CD4-positive, alpha-beta memory T cell (primary cell): ENCODE measurements at regions of chr2 and their contacts with region 1.

Region 1: GRCh38 chr2:98518090-98518489 is 73.4 kb downstream of the INPP4A start:
- DNase-seq: peak; percentile 55 to 65 (median 61)
- H3K4me3 ChIP-seq: no peak overlapping the region
- H3K4me3 Mint-ChIP-seq: no peak overlapping the region
- H3K27ac ChIP-seq: no peak overlapping the region
- H3K27ac Mint-ChIP-seq: peak overlapping the region in 5 of 7 donors; percentile 19 to 70 (median 45)
- H3K4me1 ChIP-seq: peaks cover 54% of the 10 kb centered on the region
- H3K4me1 Mint-ChIP-seq: peaks cover 38 to 58% (median 50%) of the 10 kb centered on the region in 4 donors
- H3K27me3 ChIP-seq: no peaks in the 10 kb centered on the region
- H3K27me3 Mint-ChIP-seq: no peaks in the 10 kb centered on the region

Region 2: GRCh38 chr2:98479959-98480524 is 38.0 kb before region 1 on chr2:
- CTCF ChIA-PET with region 1: interaction called, 5 read pairs
- POLR2A ChIA-PET with region 1: no interaction called
- intact Hi-C with region 1: loop called (anchors 5 kb)
- DNase-seq: peak in 3 of 5 donors; percentile 33 to 89 (median 42)
- H3K4me3 ChIP-seq: no peak overlapping the region
- H3K4me3 Mint-ChIP-seq: peak overlapping the region; percentile 41 to 75 (median 72)
- H3K27ac ChIP-seq: peak overlapping the region; percentile 61
- H3K27ac Mint-ChIP-seq: peak overlapping the region; percentile 91 to 95 (median 93)
- H3K4me1 ChIP-seq: peaks cover 100% of the 10 kb centered on the region
- H3K4me1 Mint-ChIP-seq: peaks cover 84 to 100% (median 93%) of the 10 kb centered on the region in 4 donors
- H3K27me3 ChIP-seq: no peaks in the 10 kb centered on the region
- H3K27me3 Mint-ChIP-seq: no peaks in the 10 kb centered on the region

Region 3: GRCh38 chr2:98505311-98505808 is 12.7 kb before region 1 on chr2:
- CTCF ChIA-PET with region 1: interaction called, 10 read pairs
- POLR2A ChIA-PET with region 1: no interaction called
- intact Hi-C with region 1: loop called (anchors 2 kb)
- DNase-seq: peak in 2 of 5 donors; percentile 24 to 31
- H3K4me3 ChIP-seq: no peak overlapping the region
- H3K4me3 Mint-ChIP-seq: peak overlapping the region in 7 of 8 donors; percentile 8 to 73 (median 42)
- H3K27ac ChIP-seq: peak overlapping the region; percentile 24
- H3K27ac Mint-ChIP-seq: peak overlapping the region; percentile 65 to 85 (median 79)
- H3K4me1 ChIP-seq: peaks cover 93% of the 10 kb centered on the region
- H3K4me1 Mint-ChIP-seq: peaks cover 73 to 95% (median 85%) of the 10 kb centered on the region in 4 donors
- H3K27me3 ChIP-seq: no peaks in the 10 kb centered on the region
- H3K27me3 Mint-ChIP-seq: no peaks in the 10 kb centered on the region